Panc1 (cell line): ENCODE measurements at regions of chr6 and their contacts with region 1.

Region 1: DNA sequence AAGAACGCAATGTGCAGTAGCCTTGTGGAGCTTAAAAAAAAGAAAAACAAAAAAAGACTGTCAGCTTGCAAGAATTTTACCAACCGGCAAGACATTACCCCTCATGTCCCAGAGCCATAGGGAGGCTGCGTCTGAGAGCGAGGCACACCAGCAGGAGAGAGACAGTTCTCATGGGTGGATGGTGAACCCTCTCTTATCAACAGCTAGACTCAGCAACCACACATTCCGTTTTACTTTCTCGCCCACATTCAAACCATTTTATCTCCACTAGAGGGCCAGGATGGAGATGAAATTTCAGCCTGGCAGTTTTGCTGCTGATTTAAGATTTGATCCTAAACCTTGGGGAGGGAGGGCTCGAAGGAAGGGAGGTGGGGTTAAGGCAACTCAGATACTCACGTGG is 247.0 kb downstream of the ATXN1 start:
- DNase-seq: peak; percentile 10
- ATAC-seq: peak; percentile 71
- H3K4me3 ChIP-seq: no peak overlapping the region
- H3K27ac ChIP-seq: no peak overlapping the region
- H3K4me1 ChIP-seq: 0 out of 2 replicates have a peak, but pooled peaks cover 3% of the 10 kb centered on the region
- H3K27me3 ChIP-seq: no peaks in the 10 kb centered on the region
- CTCF ChIP-seq: peak; percentile 69

Region 2: DNA sequence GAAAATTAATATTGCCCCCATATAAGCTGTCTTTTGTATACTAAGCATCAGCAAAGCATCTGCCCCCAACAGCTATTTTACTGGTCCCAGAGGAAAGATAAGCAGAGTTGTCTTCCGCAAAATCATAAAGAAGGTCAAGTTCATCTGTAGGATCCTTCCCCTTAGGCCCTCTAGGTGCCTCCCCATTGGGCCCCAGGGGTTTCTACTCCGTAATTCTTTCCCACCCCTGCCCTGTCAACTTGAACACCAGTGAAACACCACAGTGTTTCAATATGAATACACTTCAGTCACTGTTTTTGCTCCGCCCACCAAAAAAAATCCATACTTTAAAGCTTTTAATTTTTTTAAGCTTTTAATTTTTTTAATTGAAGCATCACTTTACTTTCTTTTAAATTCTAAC is 87.8 kb after region 1 on chr6:
- CTCF ChIA-PET with region 1: interaction called, 11 read pairs
- POLR2A ChIA-PET with region 1: no interaction called
- in situ Hi-C with region 1: no loop called
- intact Hi-C with region 1: no loop called
- DNase-seq: no peak
- ATAC-seq: no peak
- H3K4me3 ChIP-seq: no peak overlapping the region
- H3K27ac ChIP-seq: no peak overlapping the region
- H3K4me1 ChIP-seq: no peaks in the 10 kb centered on the region
- H3K27me3 ChIP-seq: no peaks in the 10 kb centered on the region
- CTCF ChIP-seq: no peak

Region 3: GRCh38 chr6:16712931-16713484 is 198.8 kb after region 1 on chr6:
- CTCF ChIA-PET with region 1: no interaction called
- POLR2A ChIA-PET with region 1: no interaction called
- in situ Hi-C with region 1: no loop called
- intact Hi-C with region 1: loop called (anchors 5 kb)
- DNase-seq: peak; percentile 95
- ATAC-seq: peak; percentile 79
- H3K4me3 ChIP-seq: peak overlapping the region; percentile 22 to 39
- H3K27ac ChIP-seq: peak overlapping the region; percentile 99
- H3K4me1 ChIP-seq: peaks cover 92% of the 10 kb centered on the region
- H3K27me3 ChIP-seq: no peaks in the 10 kb centered on the region
- CTCF ChIP-seq: peak; percentile 47

Region 4: GRCh38 chr6:16883414-16883813 is 369.2 kb after region 1 on chr6:
- CTCF ChIA-PET with region 1: no interaction called
- POLR2A ChIA-PET with region 1: no interaction called
- in situ Hi-C with region 1: no loop called
- intact Hi-C with region 1: no loop called
- DNase-seq: no peak
- ATAC-seq: no peak
- H3K4me3 ChIP-seq: no peak overlapping the region
- H3K27ac ChIP-seq: no peak overlapping the region
- H3K4me1 ChIP-seq: no peaks in the 10 kb centered on the region
- H3K27me3 ChIP-seq: peaks cover 7% of the 10 kb centered on the region; the same call in 1 of the 2 replicates
- CTCF ChIP-seq: no peak

Region 5: DNA sequence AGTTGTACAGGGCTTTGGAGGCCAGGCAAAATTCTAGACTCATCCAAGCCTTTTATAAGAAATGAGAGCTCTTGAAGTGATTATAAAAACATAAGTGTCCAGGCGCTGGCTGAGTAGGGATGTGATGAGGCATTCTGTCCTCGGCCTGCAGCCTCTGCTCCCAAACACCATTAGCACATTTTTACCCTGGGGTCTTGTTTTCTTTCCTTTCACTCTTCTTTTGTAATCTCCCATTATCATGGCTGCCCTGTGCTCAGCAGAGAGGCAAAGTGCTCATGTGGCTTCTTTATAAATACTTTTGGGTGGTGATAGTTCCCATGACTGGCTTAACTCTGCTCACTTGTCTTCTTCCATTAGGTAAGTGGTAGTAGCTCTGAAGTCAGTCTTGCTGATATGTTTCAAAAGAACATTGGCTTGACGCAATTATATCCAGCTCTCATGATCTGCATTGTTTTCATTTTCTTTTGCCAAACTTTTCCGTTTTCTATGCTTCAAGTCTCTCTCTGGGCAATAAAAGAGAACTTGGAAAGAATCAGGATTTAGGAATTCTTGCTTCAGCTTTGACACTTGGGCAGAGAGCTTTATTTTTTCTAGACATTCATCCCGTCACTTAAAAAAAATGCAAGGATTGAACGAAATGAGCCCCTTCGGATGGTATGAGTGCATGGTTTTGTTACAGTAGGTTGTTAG is 940.2 kb after region 1 on chr6:
- CTCF ChIA-PET with region 1: no interaction called
- POLR2A ChIA-PET with region 1: no interaction called
- in situ Hi-C with region 1: no loop called
- intact Hi-C with region 1: no loop called
- DNase-seq: no peak
- ATAC-seq: no peak
- H3K4me3 ChIP-seq: no peak overlapping the region
- H3K27ac ChIP-seq: no peak overlapping the region
- H3K4me1 ChIP-seq: no peaks in the 10 kb centered on the region
- H3K27me3 ChIP-seq: no peaks in the 10 kb centered on the region
- CTCF ChIP-seq: no peak